ENCODE measurements at regions of chr3 and their contacts with region 1.

Region 1: DNA sequence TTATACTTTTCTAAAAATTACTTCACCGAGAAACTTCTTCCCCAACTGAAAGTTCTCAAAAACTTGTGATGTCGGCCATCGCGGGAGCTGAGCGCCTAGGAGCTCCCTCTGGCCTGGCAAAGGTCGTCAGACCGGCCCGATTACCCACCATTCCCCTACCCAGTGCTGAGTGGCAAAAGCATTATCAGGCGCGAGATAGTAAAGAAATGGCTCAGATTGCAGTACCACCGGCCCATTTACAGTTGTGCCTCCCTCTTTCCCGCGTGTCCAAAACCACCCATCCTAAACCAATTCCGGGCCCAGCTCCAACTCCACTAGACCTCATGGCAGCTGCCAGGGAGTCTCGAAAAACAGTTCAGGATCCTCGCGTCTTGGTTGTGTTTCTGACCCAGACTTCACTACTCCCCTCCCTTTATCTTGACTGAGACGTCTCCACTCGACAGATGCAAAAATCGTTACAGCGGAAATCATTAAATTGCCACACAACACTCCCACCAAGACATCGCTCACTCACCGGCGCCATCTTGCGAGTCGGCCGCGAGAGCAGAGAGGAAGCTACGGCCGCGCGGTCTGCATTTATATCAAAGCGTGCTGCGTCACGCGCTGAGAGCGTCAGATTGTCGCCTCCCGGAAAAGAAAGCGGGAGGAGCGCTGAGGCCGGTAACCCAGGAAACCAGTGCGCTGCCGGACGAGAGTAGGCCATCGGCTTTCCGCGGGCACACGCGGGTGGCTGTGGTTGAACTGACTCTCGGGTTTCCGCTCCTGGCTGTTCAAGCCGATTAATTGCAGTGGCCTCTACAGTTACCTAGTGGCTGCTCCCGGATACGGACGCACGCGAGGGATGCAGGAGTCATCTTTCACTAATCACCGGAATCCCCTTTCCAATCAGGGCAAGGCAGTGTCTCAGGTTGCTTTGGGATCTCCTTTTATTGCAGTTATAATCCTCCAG is at the start of gene RPL22L1:
- DNase-seq: peak; percentile 91

Region 2: DNA sequence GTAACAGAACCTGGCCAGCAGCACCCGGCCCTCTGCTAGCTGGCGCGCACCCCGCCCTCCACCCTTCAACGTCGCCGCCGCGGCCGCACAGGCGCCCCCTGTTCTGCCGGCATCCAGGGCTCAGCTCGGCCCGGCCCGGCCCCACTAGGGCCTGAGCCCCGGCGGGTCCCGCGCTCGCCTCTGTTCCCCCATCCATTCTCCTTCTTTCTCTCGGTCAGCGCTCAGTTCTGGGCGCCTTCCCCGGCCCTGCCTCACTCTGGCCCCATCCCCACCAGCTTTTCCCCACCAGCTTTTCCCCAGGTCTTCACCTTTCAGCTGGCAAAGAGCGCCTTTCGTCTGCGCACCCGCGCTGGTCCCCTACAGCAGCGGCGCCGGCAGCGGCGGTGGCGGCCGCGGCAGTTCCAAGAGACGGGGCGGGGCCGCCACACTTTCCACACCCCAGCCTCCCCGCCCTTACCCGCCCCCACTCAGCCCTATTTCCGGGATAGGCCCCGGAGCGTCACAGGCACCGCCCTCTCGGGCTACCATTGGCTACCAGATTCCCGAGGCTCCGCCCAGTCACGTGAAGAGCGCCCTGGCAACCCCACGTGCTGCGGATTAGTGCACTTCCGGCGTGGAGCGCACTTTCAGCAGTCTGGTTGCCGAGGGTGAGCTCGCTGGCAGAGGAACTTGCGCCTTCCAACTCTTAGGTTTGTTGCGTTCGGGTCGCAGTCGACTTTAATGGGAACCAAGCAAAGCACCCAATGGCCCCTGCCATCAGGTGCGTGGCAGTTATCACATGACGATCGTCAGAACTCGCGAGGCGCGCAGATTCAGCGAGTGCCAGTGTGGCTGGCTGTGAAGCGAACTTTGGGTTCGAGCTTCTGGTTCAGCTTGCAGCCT is 38.6 kb after region 1 on chr3 and contains the start of gene EIF5A2:
- CTCF ChIA-PET with region 1: no interaction called
- POLR2A ChIA-PET with region 1: interaction called, 11 read pairs
- DNase-seq: peak; percentile 99

Region 3: DNA sequence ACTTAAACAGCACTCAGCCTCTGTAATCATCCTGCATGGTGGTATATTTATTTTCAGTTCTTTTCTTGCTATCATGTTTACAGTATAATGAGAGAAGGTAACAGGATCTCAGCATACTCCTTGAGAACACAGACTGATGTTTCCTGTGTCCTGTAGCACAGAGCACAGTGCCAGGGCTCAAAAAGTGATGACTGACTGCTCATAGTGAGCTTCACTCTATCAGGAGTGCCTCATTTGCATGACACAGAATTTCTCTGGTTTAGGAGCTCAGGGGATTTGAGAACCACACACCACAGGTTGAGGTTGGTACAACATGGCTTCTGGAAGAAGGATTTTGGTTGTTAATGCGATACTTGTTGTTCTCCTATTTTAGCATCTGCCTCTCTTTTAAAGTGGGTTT is 225.1 kb after region 1 on chr3:
- CTCF ChIA-PET with region 1: no interaction called
- POLR2A ChIA-PET with region 1: no interaction called
- DNase-seq: no peak

Measured in HEK293T (cell line).